CD4-positive, alpha-beta T cell (primary cell): ENCODE measurements at regions of chr17 and their contacts with region 1.

Region 1: GRCh38 chr17:40582328-40582901 is 17.1 kb upstream of the CCR7 start:
- DNase-seq: peak; percentile 61 to 90 (median 82)
- ATAC-seq: peak; percentile 92
- H3K4me3 ChIP-seq: peak overlapping the region; percentile 21
- H3K4me3 Mint-ChIP-seq: peak overlapping the region; percentile 59
- H3K27ac ChIP-seq: peak overlapping the region; percentile 70 to 82
- H3K27ac Mint-ChIP-seq: peak overlapping the region; percentile 97
- H3K4me1 ChIP-seq: peaks cover 50% of the 10 kb centered on the region
- H3K4me1 Mint-ChIP-seq: peaks cover 93% of the 10 kb centered on the region
- H3K27me3 ChIP-seq: no peaks in the 10 kb centered on the region
- H3K27me3 Mint-ChIP-seq: no peaks in the 10 kb centered on the region
- CTCF ChIP-seq: no peak

Region 2: GRCh38 chr17:40551879-40552768 is 30.3 kb before region 1 on chr17:
- CTCF ChIA-PET with region 1: interaction called, 3 read pairs
- POLR2A ChIA-PET with region 1: interaction called, 10 read pairs
- intact Hi-C with region 1: no loop called
- DNase-seq: peak in 6 of 14 experiments; percentile 39 to 76 (median 44)
- ATAC-seq: no peak
- H3K4me3 ChIP-seq: no peak overlapping the region
- H3K4me3 Mint-ChIP-seq: peak overlapping the region; percentile 55
- H3K27ac ChIP-seq: peak overlapping the region in 1 of 2 donors; percentile 100
- H3K27ac Mint-ChIP-seq: peak overlapping the region; percentile 92
- H3K4me1 ChIP-seq: peaks cover 99% of the 10 kb centered on the region
- H3K4me1 Mint-ChIP-seq: peaks cover 99% of the 10 kb centered on the region
- H3K27me3 ChIP-seq: no peaks in the 10 kb centered on the region
- H3K27me3 Mint-ChIP-seq: no peaks in the 10 kb centered on the region
- CTCF ChIP-seq: no peak

Region 3: DNA sequence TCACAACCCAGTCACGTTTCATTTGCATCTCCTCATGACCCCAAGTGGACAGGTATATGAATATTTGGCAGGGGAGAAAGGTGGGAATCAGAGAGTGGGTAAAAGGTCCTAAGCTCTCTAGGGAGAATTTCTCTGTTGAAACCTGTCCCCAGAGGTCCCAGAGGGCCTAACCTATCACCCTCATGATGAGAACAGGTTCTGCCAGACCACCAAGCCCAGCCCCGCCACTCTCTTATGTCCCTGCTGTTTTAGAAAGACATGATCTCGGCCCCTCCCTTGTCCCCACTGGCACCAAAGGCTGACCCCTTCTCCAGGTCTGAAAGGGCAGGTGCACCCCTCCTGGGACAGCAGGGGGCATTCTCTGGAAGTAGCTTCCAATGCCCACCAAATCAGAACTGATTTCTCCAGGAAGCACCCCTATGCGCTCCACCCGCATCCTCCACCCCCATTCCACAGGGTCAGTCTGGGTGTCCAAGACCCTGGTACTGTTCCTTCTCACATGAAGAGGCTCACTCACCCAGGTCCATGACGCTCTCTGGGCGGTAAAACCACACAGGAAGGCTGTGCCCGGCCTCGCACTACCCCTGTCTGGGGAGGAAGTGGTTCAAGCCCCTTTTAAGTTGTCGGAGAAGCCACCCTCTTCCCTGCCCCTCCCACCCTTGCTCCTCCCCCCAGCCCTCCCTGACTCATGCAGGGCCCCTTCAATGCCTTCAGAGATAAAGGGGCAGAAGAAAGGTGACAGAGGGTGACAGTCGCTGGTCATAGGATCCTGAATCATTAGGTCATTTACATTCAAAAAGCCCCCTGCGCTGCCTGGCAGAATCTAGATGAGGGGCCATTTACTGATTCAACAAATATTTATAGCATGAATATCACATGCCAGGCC is 17.3 kb before region 1 on chr17 and contains the start of gene CCR7:
- CTCF ChIA-PET with region 1: interaction called, 9 read pairs
- POLR2A ChIA-PET with region 1: interaction called, 49 read pairs
- intact Hi-C with region 1: loop called (anchors 1 to 2 kb)
- DNase-seq: peak; percentile 86 to 94 (median 90)
- ATAC-seq: peak; percentile 45
- H3K4me3 ChIP-seq: peak within 1 kb of the TSS; percentile 97
- H3K4me3 Mint-ChIP-seq: peak within 1 kb of the TSS; percentile 91
- H3K27ac ChIP-seq: peak within 1 kb of the TSS; percentile 92 to 100
- H3K27ac Mint-ChIP-seq: peak within 1 kb of the TSS; percentile 92
- H3K4me1 ChIP-seq: peaks cover 82% of the 10 kb centered on the region
- H3K4me1 Mint-ChIP-seq: peaks cover 80% of the 10 kb centered on the region
- H3K27me3 ChIP-seq: no peaks in the 10 kb centered on the region
- H3K27me3 Mint-ChIP-seq: no peaks in the 10 kb centered on the region
- CTCF ChIP-seq: peak; percentile 25
- total RNA-seq, gene CCR7: 170 to 180 TPM

Region 4: DNA sequence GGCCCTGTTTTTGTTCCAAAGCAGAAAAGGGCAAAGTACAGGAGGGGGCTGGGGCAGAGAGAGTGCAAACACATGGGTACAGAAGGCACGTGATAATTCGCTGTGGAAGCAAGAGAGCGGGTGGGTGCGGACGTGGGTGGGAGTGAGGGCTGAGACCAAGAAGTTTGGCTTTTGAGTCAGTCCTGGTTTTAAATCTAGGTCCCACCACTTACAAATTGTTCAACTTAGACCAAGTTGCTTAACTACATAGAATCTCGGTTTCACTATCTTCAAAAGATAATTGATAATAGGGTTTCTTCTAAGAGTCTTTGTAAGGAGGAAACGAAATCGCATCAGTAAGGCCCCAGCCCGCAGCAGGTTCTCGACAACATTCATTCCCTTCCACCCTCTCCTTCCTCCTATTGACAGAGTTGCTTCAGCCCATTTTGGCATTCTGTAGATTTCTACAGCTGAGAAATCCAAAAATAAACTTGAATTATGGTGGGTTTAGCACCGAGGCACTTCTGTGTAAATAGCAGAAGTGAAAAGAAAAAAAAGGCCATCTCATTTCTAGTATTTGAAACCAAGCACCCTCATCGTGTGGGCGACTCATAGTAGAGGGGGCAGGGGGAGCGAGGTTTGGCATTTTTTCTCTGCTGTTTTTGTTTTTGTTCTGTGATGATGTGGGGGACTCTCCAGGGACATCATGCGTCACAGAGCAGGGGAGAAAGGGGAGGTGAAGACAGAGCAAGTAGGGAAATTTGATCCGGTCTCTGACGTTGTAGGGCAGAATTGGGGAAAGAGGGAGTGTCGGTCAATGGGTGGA is 16.4 kb after region 1 on chr17:
- CTCF ChIA-PET with region 1: interaction called, 6 read pairs
- POLR2A ChIA-PET with region 1: interaction called, 1,290 read pairs
- intact Hi-C with region 1: loop called in 1 of 2 experiments (anchors 1 kb)
- DNase-seq: peak in 13 of 14 experiments; percentile 38 to 94 (median 65)
- ATAC-seq: peak; percentile 47
- H3K4me3 ChIP-seq: peak overlapping the region; percentile 24
- H3K4me3 Mint-ChIP-seq: peak overlapping the region; percentile 71
- H3K27ac ChIP-seq: peak overlapping the region; percentile 95 to 99
- H3K27ac Mint-ChIP-seq: peak overlapping the region; percentile 98
- H3K4me1 ChIP-seq: peaks cover 78% of the 10 kb centered on the region
- H3K4me1 Mint-ChIP-seq: peaks cover 95% of the 10 kb centered on the region
- H3K27me3 ChIP-seq: no peaks in the 10 kb centered on the region
- H3K27me3 Mint-ChIP-seq: no peaks in the 10 kb centered on the region
- CTCF ChIP-seq: no peak

Region 5: GRCh38 chr17:40726919-40727318 is 144.5 kb after region 1 on chr17:
- CTCF ChIA-PET with region 1: no interaction called
- POLR2A ChIA-PET with region 1: no interaction called
- intact Hi-C with region 1: no loop called
- DNase-seq: peak in 3 of 14 experiments; percentile 29 to 38 (median 33)
- ATAC-seq: no peak
- H3K4me3 ChIP-seq: no peak overlapping the region
- H3K4me3 Mint-ChIP-seq: no peak overlapping the region
- H3K27ac ChIP-seq: no peak overlapping the region
- H3K27ac Mint-ChIP-seq: no peak overlapping the region
- H3K4me1 ChIP-seq: no peaks in the 10 kb centered on the region
- H3K4me1 Mint-ChIP-seq: no peaks in the 10 kb centered on the region
- H3K27me3 ChIP-seq: peaks cover 0 to 24% of the 10 kb centered on the region in 2 experiments
- H3K27me3 Mint-ChIP-seq: peaks cover 41% of the 10 kb centered on the region
- CTCF ChIP-seq: peak; percentile 46